ENCODE measurements at regions of chr4 and their contacts with region 1.

Region 1: GRCh38 chr4:109588176-109588575 is 28.1 kb downstream of the MCUB start:
- DNase-seq: peak; percentile 40
- H3K4me3 Mint-ChIP-seq: no peak overlapping the region
- H3K27ac Mint-ChIP-seq: peak overlapping the region; percentile 9
- H3K4me1 Mint-ChIP-seq: peaks cover 64% of the 10 kb centered on the region
- H3K27me3 Mint-ChIP-seq: no peaks in the 10 kb centered on the region

Region 2: DNA sequence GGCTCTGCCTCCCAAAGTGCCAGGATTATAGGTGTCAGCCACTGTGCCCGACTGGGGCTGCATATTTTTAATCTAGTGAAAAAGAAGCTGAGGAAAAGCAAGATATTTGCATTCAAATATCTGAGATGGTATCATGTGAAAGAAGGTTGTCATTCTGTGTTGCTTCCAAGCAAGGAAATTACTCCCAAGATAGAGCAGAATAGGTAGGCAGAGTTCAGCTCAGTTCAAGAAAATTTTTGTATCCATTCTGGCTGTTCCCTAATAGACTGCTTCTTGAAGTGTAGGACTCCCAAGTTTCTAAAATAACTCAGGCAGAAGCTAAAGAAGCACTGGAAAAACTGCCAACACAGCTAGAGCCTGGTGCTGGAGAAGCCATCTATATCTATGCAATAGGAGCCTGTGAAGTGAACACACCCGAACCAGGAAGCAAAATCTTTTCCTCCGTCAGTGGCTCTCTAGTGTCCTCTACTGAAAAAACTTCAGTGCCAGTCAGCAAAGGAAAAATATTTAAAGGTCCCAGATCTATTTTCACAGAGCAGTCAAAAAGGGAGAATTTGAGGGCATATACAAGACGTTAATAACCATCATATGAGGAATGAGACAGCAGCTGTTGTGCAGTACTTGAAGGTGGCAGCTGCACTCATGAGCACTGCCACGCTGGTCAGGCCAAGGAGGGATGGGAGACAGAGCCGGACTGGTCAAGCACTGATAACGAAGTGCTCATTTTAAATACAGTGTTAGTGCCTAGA is 13.9 kb before region 1 on chr4:
- CTCF ChIA-PET with region 1: interaction called, 14 read pairs
- POLR2A ChIA-PET with region 1: no interaction called
- DNase-seq: peak; percentile 20
- H3K4me3 Mint-ChIP-seq: peak overlapping the region; percentile 10
- H3K27ac Mint-ChIP-seq: peak overlapping the region; percentile 57
- H3K4me1 Mint-ChIP-seq: peaks cover 60% of the 10 kb centered on the region
- H3K27me3 Mint-ChIP-seq: no peaks in the 10 kb centered on the region

Region 3: DNA sequence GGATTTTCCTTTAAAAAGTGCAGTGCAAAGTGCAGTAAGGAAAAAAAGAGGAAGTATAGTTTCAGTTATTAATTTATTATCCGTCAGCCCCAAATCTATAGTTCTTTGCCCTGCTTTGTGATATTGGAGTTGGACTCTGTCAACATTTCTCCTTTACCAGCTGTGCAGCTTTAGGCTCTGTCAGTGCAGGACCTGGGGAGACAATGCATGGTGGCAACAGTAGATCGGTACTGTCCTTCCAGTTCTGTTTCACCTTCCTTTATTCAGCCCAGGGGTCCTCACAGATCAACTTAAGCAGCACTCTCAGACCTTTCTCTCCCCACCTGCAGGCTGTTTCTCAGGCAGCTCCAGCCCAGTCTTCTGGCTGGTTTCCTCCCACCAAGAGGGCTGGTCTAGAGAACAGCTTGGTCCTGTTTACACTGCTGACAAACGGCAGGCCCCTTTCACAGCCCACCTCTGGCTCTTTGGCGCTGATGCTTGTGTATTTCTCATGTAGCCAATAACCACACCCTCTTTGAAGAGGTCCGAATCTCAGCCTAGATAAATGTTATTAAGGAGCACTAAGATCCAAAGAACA is 43.4 kb after region 1 on chr4:
- CTCF ChIA-PET with region 1: no interaction called
- POLR2A ChIA-PET with region 1: no interaction called
- DNase-seq: no peak
- H3K4me3 Mint-ChIP-seq: no peak overlapping the region
- H3K27ac Mint-ChIP-seq: peak overlapping the region; percentile 58
- H3K4me1 Mint-ChIP-seq: peaks cover 42% of the 10 kb centered on the region
- H3K27me3 Mint-ChIP-seq: no peaks in the 10 kb centered on the region

Measured in activated CD4-positive, alpha-beta T cell treated with anti-CD3 and anti-CD28 coated beads, Interleukin-2, amount 10 ng/mL, durations not matched to agents 7 days and 5 days (primary cell).